ENCODE measurements at regions of chr10 and their contacts with region 1.

Region 1: GRCh38 chr10:88318803-88319202 is 264.3 kb downstream of the RNLS start:
- DNase-seq: peak; percentile 65
- H3K4me3 ChIP-seq: no peak overlapping the region
- H3K27ac ChIP-seq: no peak overlapping the region
- H3K4me1 ChIP-seq: peaks cover 37% of the 10 kb centered on the region
- CTCF ChIP-seq: peak; percentile 78

Region 2: DNA sequence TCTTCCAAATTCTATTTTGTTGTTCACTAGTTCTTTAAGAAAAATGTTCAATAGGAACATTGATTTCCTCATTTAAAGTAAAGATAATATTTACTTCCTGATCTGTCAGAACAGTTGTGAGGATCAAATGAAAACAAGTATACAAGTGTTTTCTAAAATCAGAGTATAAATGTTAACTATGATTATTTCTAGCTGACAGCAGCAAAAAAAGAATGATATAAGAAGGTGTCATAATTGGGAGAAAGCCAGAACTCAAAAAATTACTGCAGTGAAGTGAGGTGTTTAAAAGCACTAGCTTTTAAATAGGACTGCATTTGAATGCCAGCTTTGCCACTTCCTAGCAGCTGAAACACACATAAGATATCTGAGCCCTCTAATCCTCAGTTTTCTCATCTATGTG is 19.0 kb before region 1 on chr10:
- CTCF ChIA-PET with region 1: interaction called, 3 read pairs
- POLR2A ChIA-PET with region 1: interaction called, 36 read pairs
- intact Hi-C with region 1: no loop called
- DNase-seq: no peak
- H3K4me3 ChIP-seq: no peak overlapping the region
- H3K27ac ChIP-seq: no peak overlapping the region
- H3K4me1 ChIP-seq: peaks cover 17% of the 10 kb centered on the region
- CTCF ChIP-seq: no peak

Region 3: GRCh38 chr10:88366772-88367171 is 48.0 kb after region 1 on chr10:
- CTCF ChIA-PET with region 1: no interaction called
- POLR2A ChIA-PET with region 1: interaction called, 12 read pairs
- intact Hi-C with region 1: no loop called
- DNase-seq: no peak
- H3K4me3 ChIP-seq: no peak overlapping the region
- H3K27ac ChIP-seq: no peak overlapping the region
- H3K4me1 ChIP-seq: no peaks in the 10 kb centered on the region
- CTCF ChIP-seq: no peak

Region 4: DNA sequence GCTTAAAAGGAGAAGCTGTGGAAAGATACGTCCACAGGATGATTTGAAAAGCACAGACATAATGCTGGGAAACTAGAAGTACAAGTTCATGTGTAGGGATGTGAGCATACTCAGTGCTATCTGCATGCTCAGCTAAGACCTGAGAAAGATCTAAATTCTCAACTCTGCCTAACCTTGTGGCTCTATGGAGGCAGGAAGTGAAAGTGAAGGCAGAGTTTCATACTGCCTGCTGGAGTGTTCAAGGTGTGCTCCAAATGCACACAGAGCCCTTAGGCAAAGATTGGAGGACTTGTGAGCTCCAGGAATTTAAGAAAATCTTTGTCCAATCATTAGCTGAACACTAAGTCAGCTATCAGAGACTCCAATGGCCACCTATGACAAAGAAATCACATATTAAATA is 73.4 kb after region 1 on chr10:
- CTCF ChIA-PET with region 1: no interaction called
- POLR2A ChIA-PET with region 1: interaction called, 7 read pairs
- intact Hi-C with region 1: loop called (anchors 2 kb)
- DNase-seq: peak; percentile 80
- H3K4me3 ChIP-seq: peak overlapping the region; percentile 28
- H3K27ac ChIP-seq: peak overlapping the region; percentile 68
- H3K4me1 ChIP-seq: peaks cover 55% of the 10 kb centered on the region
- CTCF ChIP-seq: no peak